ENCODE measurements at regions of chr20 and their contacts with region 1.

Region 1: DNA sequence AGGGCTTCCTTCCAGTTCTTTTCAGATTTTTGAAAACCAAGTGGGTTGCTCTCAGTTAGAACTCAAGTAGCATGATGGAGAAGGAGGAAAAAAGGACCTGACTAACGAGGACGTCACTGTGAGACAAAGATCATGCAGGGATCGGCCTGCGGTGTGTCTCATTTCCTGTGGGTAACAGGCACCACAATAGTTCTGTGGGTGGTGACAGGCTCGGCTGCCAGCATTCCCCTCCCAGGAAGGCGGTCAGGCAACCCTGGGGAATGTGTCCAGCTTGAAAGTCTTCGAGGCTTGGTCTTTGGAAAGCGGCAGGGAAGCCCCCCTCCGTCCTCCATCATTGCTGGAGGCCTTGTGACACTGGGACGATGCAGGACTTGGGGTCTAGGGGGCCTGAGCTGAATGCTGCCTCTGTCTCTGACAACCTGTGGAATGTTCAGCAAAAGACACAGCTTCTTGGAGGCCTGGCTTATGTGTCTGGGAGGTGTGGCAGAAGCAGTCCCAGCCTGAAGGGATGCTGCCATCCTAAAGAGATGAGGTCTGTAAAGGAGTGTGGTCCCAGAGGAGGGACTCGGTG is 121.0 kb downstream of the BCAS1 start:
- DNase-seq: no peak
- ATAC-seq: peak; percentile 93
- H3K4me3 ChIP-seq: peak overlapping the region; percentile 18; the same call in 1 of the 2 replicates
- H3K27ac ChIP-seq: peak overlapping the region; percentile 74
- H3K4me1 ChIP-seq: peaks cover 20% of the 10 kb centered on the region
- H3K27me3 ChIP-seq: no peaks in the 10 kb centered on the region
- CTCF ChIP-seq: no peak
- EP300 ChIP-seq: peak; percentile 65 to 82; a peak in 3 of 4 replicates
- POLR2A ChIP-seq: peak; percentile 48; the same call in 1 of the 2 replicates
- RAD21 ChIP-seq: no peak

Region 2: DNA sequence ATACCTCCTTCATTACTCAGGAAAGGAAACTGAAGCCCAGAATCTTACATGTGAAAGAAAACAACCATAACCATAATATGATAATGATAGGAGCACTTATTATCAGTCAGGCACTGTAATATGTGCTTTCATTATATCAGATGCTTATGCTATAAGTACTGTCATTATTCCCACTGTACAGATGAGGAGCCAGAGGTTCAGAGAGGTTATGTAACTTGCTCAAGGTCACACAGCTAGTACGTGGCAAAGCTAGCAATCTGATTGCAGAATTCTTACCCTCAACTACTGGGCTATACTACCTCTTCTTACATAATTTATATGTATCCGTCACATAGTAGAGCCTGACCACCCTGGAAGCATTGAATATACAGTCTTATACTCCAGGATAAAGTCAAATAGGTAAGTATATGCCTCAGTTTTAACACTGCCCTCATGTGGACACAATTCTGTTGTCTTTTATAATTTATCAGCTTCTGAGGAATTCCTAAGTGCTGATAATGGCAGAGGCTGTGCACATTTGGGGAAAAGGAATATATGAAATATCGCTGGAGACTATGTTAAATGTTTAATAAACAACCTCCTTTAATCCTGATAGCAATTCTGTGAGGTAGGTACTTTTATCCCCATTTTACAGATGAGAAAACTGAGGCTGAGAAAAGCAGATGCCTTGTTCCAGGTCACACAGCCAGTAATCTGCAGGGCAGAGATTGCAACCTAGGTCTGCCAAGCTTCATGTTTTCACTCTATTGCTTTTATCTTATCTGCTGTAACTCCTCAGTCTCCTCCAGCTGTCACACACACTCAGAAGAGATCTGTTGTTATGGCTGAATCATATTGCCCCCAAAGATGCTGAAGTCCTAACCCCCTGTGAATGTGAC is 107.6 kb after region 1 on chr20:
- CTCF ChIA-PET with region 1: interaction called, 53 read pairs
- POLR2A ChIA-PET with region 1: interaction called, 3 read pairs
- RAD21 ChIA-PET with region 1: interaction called, 9 read pairs
- SMC1A ChIA-PET with region 1: interaction called, 48 read pairs
- in situ Hi-C with region 1: loop called (anchors 5 kb)
- intact Hi-C with region 1: no loop called
- DNase-seq: no peak
- ATAC-seq: no peak; the same call in 2 of the 3 replicates
- H3K4me3 ChIP-seq: no peak overlapping the region
- H3K27ac ChIP-seq: no peak overlapping the region
- H3K4me1 ChIP-seq: no peaks in the 10 kb centered on the region
- H3K27me3 ChIP-seq: no peaks in the 10 kb centered on the region; a peak in 1 of 4 replicates
- CTCF ChIP-seq: no peak; a peak in 1 of 6 replicates
- EP300 ChIP-seq: no peak
- POLR2A ChIP-seq: no peak
- RAD21 ChIP-seq: no peak